ENCODE measurements at regions of chr13 and their contacts with region 1.

Region 1: GRCh38 chr13:28796938-28797257 is 23.2 kb upstream of the MTUS2 start:
- DNase-seq: no peak
- H3K4me3 ChIP-seq: no peak overlapping the region
- H3K4me3 Mint-ChIP-seq: peak overlapping the region; percentile 69
- H3K27ac Mint-ChIP-seq: no peak overlapping the region
- H3K4me1 ChIP-seq: no peaks in the 10 kb centered on the region
- H3K4me1 Mint-ChIP-seq: peaks cover 4% of the 10 kb centered on the region
- H3K27me3 ChIP-seq: no peaks in the 10 kb centered on the region
- H3K27me3 Mint-ChIP-seq: peaks cover 20% of the 10 kb centered on the region
- CTCF ChIP-seq: no peak

Region 2: DNA sequence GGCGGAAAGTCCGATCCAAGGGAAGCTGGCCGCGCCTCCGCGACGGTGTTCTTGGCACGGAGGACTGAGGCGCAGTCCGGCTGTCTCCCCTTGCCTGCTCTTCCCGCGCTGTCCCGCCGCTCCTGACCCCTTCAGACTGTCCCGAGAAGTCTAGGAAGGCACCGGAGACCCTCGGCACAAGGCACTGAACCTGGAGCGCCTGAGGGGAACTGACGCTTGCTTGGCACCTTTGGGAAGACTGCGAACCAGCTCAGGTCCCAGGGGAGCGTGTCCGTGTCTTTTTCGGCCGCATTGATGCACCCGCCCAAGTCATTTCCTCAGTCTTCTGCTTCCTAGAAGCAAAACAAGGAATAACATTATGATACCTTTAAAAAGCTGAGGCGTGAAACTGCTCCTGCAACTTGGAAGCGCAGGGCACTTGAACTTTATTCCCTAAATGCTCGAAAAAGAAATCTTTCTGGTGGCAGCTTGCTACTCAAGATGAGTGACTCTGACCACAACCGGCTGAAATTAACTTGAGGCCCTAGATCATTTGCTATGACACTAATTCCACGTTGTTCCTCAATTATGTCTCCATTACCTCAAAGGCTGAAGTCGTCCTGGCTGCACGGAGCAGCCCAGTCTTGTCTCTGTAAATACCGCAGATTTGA is 301.2 kb before region 1 on chr13:
- CTCF ChIA-PET with region 1: no interaction called
- POLR2A ChIA-PET with region 1: no interaction called
- intact Hi-C with region 1: no loop called
- DNase-seq: no peak
- H3K4me3 ChIP-seq: peak overlapping the region; percentile 49
- H3K4me3 Mint-ChIP-seq: peak overlapping the region; percentile 71
- H3K27ac Mint-ChIP-seq: no peak overlapping the region
- H3K4me1 ChIP-seq: peaks cover 15% of the 10 kb centered on the region; the same call in 1 of the 2 replicates
- H3K4me1 Mint-ChIP-seq: peaks cover 9% of the 10 kb centered on the region
- H3K27me3 ChIP-seq: peaks cover 10% of the 10 kb centered on the region
- H3K27me3 Mint-ChIP-seq: peaks cover 17% of the 10 kb centered on the region
- CTCF ChIP-seq: no peak

Region 3: GRCh38 chr13:28530729-28531076 is 266.2 kb before region 1 on chr13:
- CTCF ChIA-PET with region 1: no interaction called
- POLR2A ChIA-PET with region 1: no interaction called
- intact Hi-C with region 1: loop called (anchors 5 kb)
- DNase-seq: no peak
- H3K4me3 ChIP-seq: peak overlapping the region; percentile 28
- H3K4me3 Mint-ChIP-seq: no peak overlapping the region
- H3K27ac Mint-ChIP-seq: no peak overlapping the region
- H3K4me1 ChIP-seq: no peaks in the 10 kb centered on the region
- H3K4me1 Mint-ChIP-seq: no peaks in the 10 kb centered on the region
- H3K27me3 ChIP-seq: no peaks in the 10 kb centered on the region
- H3K27me3 Mint-ChIP-seq: no peaks in the 10 kb centered on the region
- CTCF ChIP-seq: no peak

Region 4: GRCh38 chr13:28679628-28680027 is 117.3 kb before region 1 on chr13:
- CTCF ChIA-PET with region 1: interaction called, 13 read pairs
- POLR2A ChIA-PET with region 1: no interaction called
- intact Hi-C with region 1: loop called (anchors 1 kb)
- DNase-seq: no peak
- H3K4me3 ChIP-seq: no peak overlapping the region
- H3K4me3 Mint-ChIP-seq: no peak overlapping the region
- H3K27ac Mint-ChIP-seq: no peak overlapping the region
- H3K4me1 ChIP-seq: no peaks in the 10 kb centered on the region
- H3K4me1 Mint-ChIP-seq: no peaks in the 10 kb centered on the region
- H3K27me3 ChIP-seq: no peaks in the 10 kb centered on the region
- H3K27me3 Mint-ChIP-seq: no peaks in the 10 kb centered on the region
- CTCF ChIP-seq: peak; percentile 40 to 50

Region 5: DNA sequence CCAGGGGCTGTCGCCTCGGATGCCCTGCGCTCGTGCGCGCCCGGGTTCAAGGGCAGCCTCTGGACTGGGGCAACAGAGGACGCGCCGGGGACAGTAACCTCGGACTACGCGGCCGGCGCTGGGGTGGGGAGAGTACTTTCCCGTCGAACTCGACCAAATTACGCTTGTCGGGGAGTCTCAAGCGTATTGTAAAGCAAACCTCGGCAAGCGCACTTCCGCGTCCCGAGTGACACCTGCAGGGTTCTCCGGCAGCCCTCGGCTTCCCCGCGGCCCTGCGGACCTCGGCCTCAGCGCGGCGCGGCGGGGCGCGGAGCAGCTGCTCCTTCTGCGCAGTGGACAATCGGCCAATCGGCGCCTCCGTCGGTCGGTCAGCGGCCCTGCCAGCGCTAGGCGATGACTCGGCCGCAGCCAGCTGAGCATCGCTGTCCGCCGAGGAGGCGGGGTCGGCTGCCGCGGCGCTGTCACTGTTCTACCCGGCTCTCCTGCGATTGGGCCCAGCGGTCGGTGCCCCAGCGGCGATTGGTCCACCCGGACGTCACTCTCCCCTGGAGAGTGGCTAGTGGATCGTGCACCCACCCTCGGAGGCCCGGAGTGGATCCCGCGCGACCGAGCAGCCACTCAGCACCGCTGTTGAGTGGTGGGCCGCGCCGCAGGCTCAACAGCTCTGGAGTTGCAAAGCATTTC is 78.2 kb before region 1 on chr13 and contains the start of gene SLC46A3:
- CTCF ChIA-PET with region 1: interaction called, 4 read pairs
- POLR2A ChIA-PET with region 1: no interaction called
- intact Hi-C with region 1: loop called (anchors 1 kb)
- DNase-seq: peak; percentile 99
- H3K4me3 ChIP-seq: peak within 1 kb of the TSS; percentile 75
- H3K4me3 Mint-ChIP-seq: peak within 1 kb of the TSS; percentile 96
- H3K27ac Mint-ChIP-seq: peak within 1 kb of the TSS; percentile 83
- H3K4me1 ChIP-seq: peaks cover 4% of the 10 kb centered on the region; the same call in 1 of the 2 replicates
- H3K4me1 Mint-ChIP-seq: peaks cover 14% of the 10 kb centered on the region
- H3K27me3 ChIP-seq: no peaks in the 10 kb centered on the region
- H3K27me3 Mint-ChIP-seq: no peaks in the 10 kb centered on the region
- CTCF ChIP-seq: no peak
- total RNA-seq, gene SLC46A3: 2.0 and 2.3 TPM in 2 replicates

Region 6: DNA sequence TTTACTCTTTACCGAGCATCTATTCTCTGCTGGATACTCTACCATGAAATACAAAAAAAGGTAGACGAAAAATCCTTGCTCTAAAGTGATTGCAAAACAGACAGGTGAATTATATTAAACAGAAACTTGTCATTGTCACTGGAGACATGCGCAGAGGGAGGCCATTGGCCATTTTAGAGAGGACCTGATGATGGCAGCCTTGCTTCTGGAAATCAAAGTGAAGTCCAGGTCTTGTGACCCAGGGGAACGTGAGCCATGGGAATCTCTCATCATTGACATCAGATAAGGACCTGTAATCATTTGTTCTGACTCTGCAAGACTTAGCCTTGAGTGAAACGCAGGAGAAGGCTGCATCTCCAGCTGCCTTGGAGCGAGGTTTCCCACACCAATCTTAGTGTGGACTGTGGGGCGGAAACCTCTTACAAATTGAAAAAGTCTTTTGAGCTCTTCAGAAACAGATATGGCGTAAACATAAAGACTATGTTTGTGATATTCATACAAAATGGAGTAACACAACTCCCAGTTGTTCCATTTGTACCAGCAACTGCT is 61.3 kb before region 1 on chr13:
- CTCF ChIA-PET with region 1: no interaction called
- POLR2A ChIA-PET with region 1: no interaction called
- intact Hi-C with region 1: loop called (anchors 1 kb)
- DNase-seq: peak in 1 of 2 experiments; percentile 18
- H3K4me3 ChIP-seq: no peak overlapping the region
- H3K4me3 Mint-ChIP-seq: no peak overlapping the region
- H3K27ac Mint-ChIP-seq: no peak overlapping the region
- H3K4me1 ChIP-seq: no peaks in the 10 kb centered on the region
- H3K4me1 Mint-ChIP-seq: no peaks in the 10 kb centered on the region
- H3K27me3 ChIP-seq: no peaks in the 10 kb centered on the region
- H3K27me3 Mint-ChIP-seq: peaks cover 3% of the 10 kb centered on the region
- CTCF ChIP-seq: no peak

Region 7: DNA sequence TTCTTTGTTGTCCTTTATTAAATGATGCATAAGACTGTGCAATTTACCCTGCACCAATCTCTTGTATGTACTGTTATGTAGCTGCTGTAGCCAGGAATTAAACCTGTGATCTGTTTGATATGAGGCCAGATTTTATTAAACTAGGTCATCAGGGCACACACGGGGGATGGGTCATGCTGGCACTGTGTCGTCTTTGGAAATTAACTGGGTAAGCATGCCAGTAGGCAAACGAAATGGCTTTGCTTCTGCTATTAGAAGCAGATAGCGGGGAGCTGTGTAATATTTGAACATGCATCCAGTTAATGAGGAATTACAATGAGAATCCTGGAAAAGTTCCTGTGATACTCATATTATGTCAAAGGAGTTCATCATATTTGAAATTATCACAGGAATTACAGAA is 46.7 kb after region 1 on chr13:
- CTCF ChIA-PET with region 1: no interaction called
- POLR2A ChIA-PET with region 1: no interaction called
- intact Hi-C with region 1: no loop called
- DNase-seq: no peak
- H3K4me3 ChIP-seq: no peak overlapping the region
- H3K4me3 Mint-ChIP-seq: no peak overlapping the region
- H3K27ac Mint-ChIP-seq: no peak overlapping the region
- H3K4me1 ChIP-seq: no peaks in the 10 kb centered on the region
- H3K4me1 Mint-ChIP-seq: no peaks in the 10 kb centered on the region
- H3K27me3 ChIP-seq: no peaks in the 10 kb centered on the region; the same call in 1 of the 2 replicates
- H3K27me3 Mint-ChIP-seq: peaks cover 17% of the 10 kb centered on the region
- CTCF ChIP-seq: no peak

Measured in Caco-2 (cell line).